WTC11 (cell line): ENCODE measurements at regions of chr17 and their contacts with region 1.

Region 1: GRCh38 chr17:75601057-75602051 is 13.8 kb downstream of the MYO15B start:
- DNase-seq: peak; percentile 94
- ATAC-seq: peak; percentile 96
- H3K4me3 Mint-ChIP-seq: no peak overlapping the region
- H3K27ac Mint-ChIP-seq: no peak overlapping the region
- H3K4me1 Mint-ChIP-seq: no peaks in the 10 kb centered on the region
- H3K27me3 Mint-ChIP-seq: no peaks in the 10 kb centered on the region
- CTCF ChIP-seq: peak; percentile 96

Region 2: DNA sequence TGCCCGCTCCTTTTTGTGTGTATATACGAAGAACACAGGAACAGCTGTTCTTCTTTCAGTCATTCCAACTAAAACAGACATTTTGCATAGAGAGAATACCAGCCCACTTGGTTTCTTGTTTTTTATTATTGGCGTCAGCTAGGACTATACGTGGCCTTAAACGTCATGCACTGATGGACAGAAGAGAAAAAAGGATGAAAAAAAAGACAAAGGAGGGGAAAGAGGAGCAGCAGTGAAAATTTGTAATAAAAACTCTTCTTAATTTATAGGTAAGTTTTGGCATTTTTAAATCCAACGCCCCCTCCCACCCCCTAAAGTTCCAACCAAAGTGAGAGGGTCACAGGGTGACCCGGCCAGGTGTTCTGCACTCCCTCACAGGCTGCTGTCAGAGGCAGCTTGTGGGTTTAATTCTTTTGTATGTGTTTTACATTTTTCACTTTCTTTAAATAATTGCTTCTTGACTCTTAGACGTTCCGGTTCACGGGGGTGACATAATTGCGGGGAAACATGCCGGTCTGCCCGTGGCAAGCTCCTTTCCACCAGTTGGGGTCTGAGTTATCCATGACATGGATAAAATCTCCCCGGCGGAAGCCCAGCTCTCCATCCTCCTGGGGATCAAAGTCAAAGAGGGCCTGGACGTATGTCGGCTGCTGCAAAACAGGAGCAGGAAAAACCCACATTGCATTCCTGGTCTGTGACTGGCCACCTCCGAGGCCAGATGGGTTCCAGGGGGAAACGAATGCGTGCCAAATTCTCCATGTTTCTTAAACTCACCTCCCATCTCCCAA is 281.3 kb before region 1 on chr17:
- CTCF ChIA-PET with region 1: no interaction called
- POLR2A ChIA-PET with region 1: no interaction called
- DNase-seq: no peak
- ATAC-seq: no peak
- H3K4me3 Mint-ChIP-seq: no peak overlapping the region
- H3K27ac Mint-ChIP-seq: peak overlapping the region; percentile 14; the same call in 1 of the 2 replicates
- H3K4me1 Mint-ChIP-seq: peaks cover 16% of the 10 kb centered on the region
- H3K27me3 Mint-ChIP-seq: no peaks in the 10 kb centered on the region
- CTCF ChIP-seq: no peak

Region 3: GRCh38 chr17:75345514-75346167 is 255.7 kb before region 1 on chr17:
- CTCF ChIA-PET with region 1: interaction called, 10 read pairs
- POLR2A ChIA-PET with region 1: no interaction called
- DNase-seq: peak; percentile 27
- ATAC-seq: peak; percentile 51
- H3K4me3 Mint-ChIP-seq: peak overlapping the region; percentile 67
- H3K27ac Mint-ChIP-seq: peak overlapping the region; percentile 98
- H3K4me1 Mint-ChIP-seq: peaks cover 84% of the 10 kb centered on the region
- H3K27me3 Mint-ChIP-seq: no peaks in the 10 kb centered on the region
- CTCF ChIP-seq: no peak

Region 4: GRCh38 chr17:75549221-75550138 is 51.9 kb before region 1 on chr17:
- CTCF ChIA-PET with region 1: interaction called, 19 read pairs
- POLR2A ChIA-PET with region 1: no interaction called
- DNase-seq: peak; percentile 76
- ATAC-seq: peak; percentile 83
- H3K4me3 Mint-ChIP-seq: peak overlapping the region; percentile 62
- H3K27ac Mint-ChIP-seq: peak overlapping the region; percentile 95
- H3K4me1 Mint-ChIP-seq: peaks cover 36% of the 10 kb centered on the region
- H3K27me3 Mint-ChIP-seq: no peaks in the 10 kb centered on the region
- CTCF ChIP-seq: no peak

Region 5: DNA sequence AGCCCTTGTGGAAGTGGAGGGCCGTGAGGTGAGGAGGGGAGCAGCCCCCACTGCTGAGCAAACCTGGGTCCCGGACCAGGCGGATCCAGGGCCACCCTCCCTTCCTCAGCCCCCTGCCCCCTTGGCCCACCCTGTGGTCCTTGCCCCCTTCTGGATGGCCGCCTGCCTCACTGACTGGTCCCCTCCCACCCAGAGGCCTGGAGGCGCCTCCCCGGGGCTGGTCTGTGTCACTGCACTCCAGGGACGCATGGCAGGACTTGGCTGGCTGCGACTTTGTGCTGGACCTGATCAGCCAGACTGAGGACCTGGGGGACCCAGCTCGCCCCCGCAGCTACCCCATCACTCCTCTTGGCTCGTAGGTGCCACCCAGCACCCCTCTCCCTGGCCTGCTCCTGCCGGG is 12.7 kb after region 1 on chr17:
- CTCF ChIA-PET with region 1: interaction called, 158 read pairs
- POLR2A ChIA-PET with region 1: no interaction called
- DNase-seq: peak; percentile 65
- ATAC-seq: peak; percentile 77
- H3K4me3 Mint-ChIP-seq: no peak overlapping the region
- H3K27ac Mint-ChIP-seq: no peak overlapping the region
- H3K4me1 Mint-ChIP-seq: no peaks in the 10 kb centered on the region
- H3K27me3 Mint-ChIP-seq: no peaks in the 10 kb centered on the region
- CTCF ChIP-seq: no peak

Region 6: DNA sequence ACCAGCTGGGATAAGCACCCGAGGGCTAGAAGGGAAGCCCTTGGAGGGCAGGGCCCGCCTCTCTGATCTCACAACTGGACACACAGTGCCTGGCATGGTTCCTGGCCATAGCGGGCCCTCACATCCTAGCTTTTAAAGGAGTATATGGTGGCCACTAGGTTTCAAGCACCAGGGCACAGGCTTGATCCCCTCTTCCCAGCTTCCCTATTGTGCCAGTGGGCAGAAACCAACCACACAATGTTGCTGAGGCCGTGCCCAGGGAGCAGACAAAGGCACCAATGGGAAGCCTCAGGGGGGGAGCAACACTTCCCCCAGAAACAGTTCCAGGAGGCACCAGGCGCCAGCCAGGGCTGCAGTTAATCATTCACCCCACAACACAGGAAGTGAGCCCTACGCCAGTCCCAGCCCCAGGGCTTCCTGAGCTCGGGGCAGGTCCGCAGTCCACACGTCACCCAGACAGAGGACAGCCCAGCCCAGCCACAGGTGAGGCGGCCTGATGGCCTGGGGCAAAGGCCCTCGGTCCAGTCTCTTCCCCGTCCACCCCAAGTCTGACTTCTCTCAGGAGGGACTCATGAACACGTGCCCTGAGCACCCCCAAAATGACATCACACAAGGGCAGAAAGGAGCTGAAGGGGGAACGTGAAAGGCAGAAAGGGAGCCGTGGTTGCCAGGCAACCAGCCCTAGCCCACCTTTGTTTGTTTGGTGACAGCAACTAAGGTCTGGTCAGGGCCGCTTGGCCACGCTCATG is 44.7 kb after region 1 on chr17:
- CTCF ChIA-PET with region 1: interaction called, 34 read pairs
- POLR2A ChIA-PET with region 1: no interaction called
- DNase-seq: no peak
- ATAC-seq: no peak
- H3K4me3 Mint-ChIP-seq: no peak overlapping the region
- H3K27ac Mint-ChIP-seq: peak overlapping the region; percentile 57
- H3K4me1 Mint-ChIP-seq: peaks cover 18% of the 10 kb centered on the region
- H3K27me3 Mint-ChIP-seq: no peaks in the 10 kb centered on the region
- CTCF ChIP-seq: no peak

Region 7: DNA sequence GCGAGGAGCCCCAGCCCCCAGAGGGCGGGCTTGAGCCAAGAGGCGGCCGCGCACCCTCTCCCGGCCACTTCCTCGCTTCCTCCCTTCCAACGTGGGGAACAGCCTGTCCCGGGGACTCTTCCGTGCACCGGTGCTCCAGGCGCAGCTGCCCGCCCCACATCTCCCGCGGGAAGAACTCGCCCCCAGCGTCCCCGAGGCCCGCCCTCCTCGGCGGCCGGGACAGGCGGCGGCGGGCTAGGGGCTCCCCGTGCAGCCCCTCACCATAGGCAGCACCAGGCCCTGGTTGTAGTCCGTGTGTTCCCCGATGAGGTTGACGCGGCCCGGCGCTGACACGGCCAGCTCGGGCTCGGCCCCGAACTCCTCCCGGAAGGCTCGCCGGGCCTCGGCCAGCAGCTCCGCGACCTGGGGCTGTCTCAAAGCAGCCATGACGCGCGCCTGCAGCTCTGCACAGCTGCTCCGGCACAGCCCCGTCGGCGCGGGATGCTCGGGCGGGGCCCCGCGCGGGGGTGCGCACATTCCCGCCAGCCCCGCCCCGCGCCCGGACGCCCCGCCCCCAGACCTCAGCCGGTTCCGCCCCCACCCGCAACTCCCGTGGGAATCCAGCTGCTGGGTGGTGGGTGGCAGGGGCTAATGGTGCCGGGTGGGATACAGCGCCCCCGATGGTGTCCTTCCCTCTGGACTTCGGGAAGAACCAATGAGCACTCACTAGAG is 163.5 kb after region 1 on chr17 and contains the start of gene GALK1:
- CTCF ChIA-PET with region 1: interaction called, 20 read pairs
- POLR2A ChIA-PET with region 1: no interaction called
- DNase-seq: peak; percentile 67
- ATAC-seq: peak; percentile 76
- H3K4me3 Mint-ChIP-seq: peak within 1 kb of the TSS; percentile 75
- H3K27ac Mint-ChIP-seq: peak within 1 kb of the TSS; percentile 92
- H3K4me1 Mint-ChIP-seq: peaks cover 9% of the 10 kb centered on the region
- H3K27me3 Mint-ChIP-seq: no peaks in the 10 kb centered on the region
- CTCF ChIP-seq: no peak
- total RNA-seq, gene GALK1: 42.2 to 49.9 TPM (median 49.4 TPM) in 3 replicates